H1 (cell line): ENCODE measurements at regions of chr2 and their contacts with region 1.

Region 1: DNA sequence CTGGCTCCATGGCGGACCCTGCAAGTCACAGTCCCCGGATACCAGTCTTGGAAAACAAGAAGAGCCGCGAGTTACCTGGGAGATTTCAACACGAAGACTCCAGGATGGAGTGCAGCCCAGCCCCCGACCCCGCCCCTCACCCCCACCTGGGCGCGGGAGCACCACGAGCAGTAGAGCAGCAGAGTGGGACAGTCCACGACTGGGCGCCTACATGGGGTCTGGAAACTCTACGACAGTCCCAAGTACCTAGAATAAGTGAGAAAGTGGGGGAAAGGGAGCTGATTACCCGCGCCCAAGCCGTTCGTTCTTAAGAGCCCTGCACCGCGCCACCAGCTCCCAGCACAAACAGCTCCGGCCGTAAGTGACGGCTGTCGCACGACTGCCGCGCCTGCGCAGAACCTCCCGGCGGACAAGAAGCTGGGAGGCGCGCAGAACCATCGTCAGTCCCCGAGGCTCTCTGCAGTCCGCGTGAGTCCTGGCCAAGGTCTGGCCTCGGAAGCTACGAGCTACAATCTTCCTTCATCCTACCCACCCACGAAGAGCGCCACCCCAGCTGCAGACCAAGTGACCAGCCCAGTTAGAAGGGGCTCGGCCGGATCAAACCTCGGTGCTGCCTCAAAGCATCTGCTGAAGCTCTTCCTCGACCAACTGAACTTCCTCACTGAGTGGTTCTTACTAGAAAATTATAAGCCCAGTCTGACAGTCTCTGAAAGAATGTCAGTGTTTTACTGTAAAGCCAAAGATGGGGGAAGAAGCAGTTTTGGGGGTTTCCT is at the start of gene DPY30:
- DNase-seq: peak; percentile 85 to 94
- H3K4me3 ChIP-seq: peak within 1 kb of the TSS; percentile 70 to 89 (median 82)
- H3K27ac ChIP-seq: peak within 1 kb of the TSS; percentile 84
- H3K4me1 ChIP-seq: no peaks in the 10 kb centered on the region; a peak in 1 of 7 replicates
- H3K27me3 ChIP-seq: no peaks in the 10 kb centered on the region
- CTCF ChIP-seq: peak in 1 of 3 experiments; percentile 12; a peak in 1 of 4 replicates
- EP300 ChIP-seq: no peak
- POLR2A ChIP-seq: peak; percentile 97 to 100
- RAD21 ChIP-seq: peak in 1 of 2 experiments; percentile 2; a peak in 1 of 4 replicates
- total RNA-seq, gene DPY30: 150 and 157 TPM in 2 replicates

Region 2: DNA sequence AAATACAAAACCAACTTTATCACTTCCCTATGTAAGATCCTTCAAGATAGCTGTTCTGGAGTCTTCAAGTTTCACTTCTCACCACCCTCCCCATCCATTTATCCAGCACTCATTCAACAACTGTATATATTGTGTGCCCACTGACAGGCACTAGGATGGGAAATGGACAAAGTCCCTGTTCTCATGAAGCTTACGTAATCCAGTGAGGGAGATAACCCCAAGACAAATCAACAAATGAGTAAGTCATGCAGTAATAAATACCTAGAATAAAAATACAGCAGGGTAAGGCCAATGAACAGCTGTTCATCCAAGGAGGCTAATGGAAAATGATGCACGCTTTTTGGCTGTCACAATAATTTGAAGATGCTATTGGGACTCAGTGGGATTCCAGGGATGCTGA is 162.6 kb before region 1 on chr2:
- CTCF ChIA-PET with region 1: no interaction called
- POLR2A ChIA-PET with region 1: no interaction called
- DNase-seq: no peak
- H3K4me3 ChIP-seq: no peak overlapping the region
- H3K27ac ChIP-seq: no peak overlapping the region
- H3K4me1 ChIP-seq: no peaks in the 10 kb centered on the region
- H3K27me3 ChIP-seq: no peaks in the 10 kb centered on the region; a peak in 1 of 7 replicates
- CTCF ChIP-seq: no peak
- EP300 ChIP-seq: no peak
- POLR2A ChIP-seq: no peak
- RAD21 ChIP-seq: no peak

Region 3: DNA sequence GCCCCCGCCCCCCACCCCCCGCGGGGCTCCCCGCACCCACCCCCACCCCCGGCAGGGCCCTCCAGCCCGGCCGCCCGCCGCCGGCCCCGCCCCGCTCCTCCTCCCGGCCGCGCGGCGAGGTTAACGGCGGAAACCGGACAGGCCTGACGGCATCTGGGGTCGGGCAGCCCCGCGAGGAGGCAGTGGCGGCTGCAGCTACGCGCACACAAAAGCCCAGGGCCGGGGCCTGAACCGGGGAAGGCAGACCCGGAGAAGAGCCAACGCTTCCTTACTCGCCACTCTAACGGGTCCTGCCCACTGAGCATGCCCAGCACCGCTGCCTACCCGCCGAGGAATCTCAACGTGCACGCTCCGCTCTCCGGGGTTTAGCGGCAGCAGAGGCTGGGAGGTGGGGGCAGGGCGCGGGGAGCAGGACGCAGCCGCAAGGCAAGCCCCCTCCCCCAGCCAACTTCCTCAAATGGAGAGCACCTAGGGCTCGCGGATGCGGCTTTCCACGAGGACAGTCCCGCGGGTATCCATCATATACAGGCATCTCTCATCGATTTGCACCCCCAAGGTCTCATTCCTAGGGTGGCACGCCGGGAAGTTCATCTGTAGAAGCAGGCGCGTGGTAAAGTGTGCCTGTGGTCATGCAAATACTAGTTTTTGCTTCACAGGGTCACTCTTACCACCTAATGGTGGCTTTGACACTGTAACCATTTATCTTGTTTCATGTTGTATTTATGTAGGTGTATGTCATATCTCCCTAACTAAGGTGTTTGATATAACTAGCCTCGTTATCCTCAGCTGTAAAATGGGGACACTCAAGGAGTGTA is 28.8 kb before region 1 on chr2 and contains the start of gene MEMO1:
- CTCF ChIA-PET with region 1: no interaction called
- POLR2A ChIA-PET with region 1: interaction called, 19 read pairs
- DNase-seq: peak; percentile 87 to 94
- H3K4me3 ChIP-seq: peak within 1 kb of the TSS; percentile 58 to 99 (median 81)
- H3K27ac ChIP-seq: peak within 1 kb of the TSS; percentile 84
- H3K4me1 ChIP-seq: peaks cover 0 to 13% (median 3%) of the 10 kb centered on the region in 4 experiments; a peak in 4 of 7 replicates
- H3K27me3 ChIP-seq: no peaks in the 10 kb centered on the region
- CTCF ChIP-seq: no peak
- EP300 ChIP-seq: peak in 1 of 2 experiments; percentile 73; a peak in 1 of 3 replicates
- POLR2A ChIP-seq: peak; percentile 63 to 78
- RAD21 ChIP-seq: peak in 1 of 2 experiments; percentile 6; a peak in 1 of 4 replicates
- total RNA-seq, gene MEMO1: 52.8 and 54.7 TPM in 2 replicates

Region 4: DNA sequence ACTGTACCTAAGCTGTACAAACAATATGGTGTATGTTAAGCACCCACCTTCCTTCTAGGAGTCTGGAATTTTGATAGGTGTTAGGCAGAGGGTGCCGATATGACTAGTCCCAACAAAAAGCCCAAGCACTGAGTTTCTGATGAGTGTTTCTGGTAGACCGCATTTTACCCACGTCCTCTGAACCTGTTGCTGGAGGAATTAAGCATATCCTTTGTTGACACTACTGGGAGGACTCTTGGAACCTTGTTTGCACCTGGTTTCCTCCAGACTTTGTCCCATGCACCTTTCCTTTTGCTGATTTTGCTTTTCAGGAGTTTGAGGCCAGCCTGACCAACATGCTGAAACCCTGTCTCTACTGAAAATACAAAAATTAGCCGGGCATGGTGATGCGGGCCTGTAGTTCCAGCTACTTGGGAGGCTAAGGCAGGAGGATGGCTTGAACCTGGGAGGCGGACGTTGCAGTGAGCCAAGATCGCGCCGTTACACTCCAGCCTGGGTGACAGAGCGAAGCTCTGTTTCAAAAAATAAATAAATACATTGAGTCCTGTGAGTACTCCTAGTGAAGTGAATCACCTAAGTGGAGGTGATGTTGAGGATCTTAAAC is 12.3 kb after region 1 on chr2:
- CTCF ChIA-PET with region 1: interaction called, 6 read pairs
- POLR2A ChIA-PET with region 1: interaction called, 13 read pairs
- DNase-seq: no peak
- H3K4me3 ChIP-seq: no peak overlapping the region
- H3K27ac ChIP-seq: no peak overlapping the region
- H3K4me1 ChIP-seq: no peaks in the 10 kb centered on the region
- H3K27me3 ChIP-seq: no peaks in the 10 kb centered on the region
- CTCF ChIP-seq: no peak
- EP300 ChIP-seq: no peak
- POLR2A ChIP-seq: no peak
- RAD21 ChIP-seq: no peak

Region 5: DNA sequence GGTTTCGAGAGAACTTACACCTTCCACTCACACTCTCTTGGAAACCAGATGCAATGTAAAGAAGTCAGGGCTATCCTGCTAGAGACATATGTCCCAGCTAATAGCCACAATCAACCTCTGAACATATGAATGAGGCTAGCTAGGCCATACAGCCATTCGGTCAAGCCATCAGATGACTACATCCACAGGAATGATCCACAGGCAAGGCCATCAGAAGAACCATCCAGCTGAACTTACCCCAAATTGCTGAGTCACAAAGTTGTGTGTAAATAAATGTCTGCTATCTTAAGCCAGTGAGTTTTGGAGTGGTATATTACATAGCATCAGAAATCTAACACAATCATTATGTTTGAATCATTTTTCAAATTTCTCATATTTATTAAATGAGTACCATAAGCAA is 18.5 kb after region 1 on chr2:
- CTCF ChIA-PET with region 1: interaction called, 13 read pairs
- POLR2A ChIA-PET with region 1: interaction called, 60 read pairs
- DNase-seq: no peak
- H3K4me3 ChIP-seq: no peak overlapping the region
- H3K27ac ChIP-seq: no peak overlapping the region
- H3K4me1 ChIP-seq: peaks cover 0 to 2% (median 0%) of the 10 kb centered on the region in 4 experiments; a peak in 1 of 7 replicates
- H3K27me3 ChIP-seq: no peaks in the 10 kb centered on the region
- CTCF ChIP-seq: no peak
- EP300 ChIP-seq: no peak
- POLR2A ChIP-seq: no peak
- RAD21 ChIP-seq: no peak

Region 6: GRCh38 chr2:32063310-32064161 is 23.9 kb after region 1 on chr2 and contains the start of gene SPAST:
- CTCF ChIA-PET with region 1: interaction called, 13 read pairs
- POLR2A ChIA-PET with region 1: interaction called, 60 read pairs
- DNase-seq: peak; percentile 96 to 97
- H3K4me3 ChIP-seq: peak within 1 kb of the TSS; percentile 54 to 83 (median 68)
- H3K27ac ChIP-seq: peak within 1 kb of the TSS; percentile 70; the same call in 1 of the 2 replicates
- H3K4me1 ChIP-seq: peaks cover 0 to 2% (median 0%) of the 10 kb centered on the region in 4 experiments; a peak in 2 of 7 replicates
- H3K27me3 ChIP-seq: no peaks in the 10 kb centered on the region
- CTCF ChIP-seq: peak; percentile 4 to 24 (median 19); a peak in 2 of 4 replicates
- EP300 ChIP-seq: 0 out of 3 replicates have a peak, but pooled peaks of 1 of the 2 experiments have one; percentile 47
- POLR2A ChIP-seq: peak; percentile 91 to 92
- RAD21 ChIP-seq: peak in 1 of 2 experiments; percentile 15; a peak in 2 of 4 replicates
- total RNA-seq, gene SPAST: 31.9 and 36.0 TPM in 2 replicates

Region 7: GRCh38 chr2:32166115-32166574 is 126.5 kb after region 1 on chr2:
- CTCF ChIA-PET with region 1: no interaction called
- POLR2A ChIA-PET with region 1: interaction called, 10 read pairs
- DNase-seq: no peak
- H3K4me3 ChIP-seq: peak overlapping the region; percentile 74 to 98 (median 94)
- H3K27ac ChIP-seq: peak overlapping the region; percentile 75; the same call in 1 of the 2 replicates
- H3K4me1 ChIP-seq: no peaks in the 10 kb centered on the region
- H3K27me3 ChIP-seq: no peaks in the 10 kb centered on the region
- CTCF ChIP-seq: no peak
- EP300 ChIP-seq: no peak
- POLR2A ChIP-seq: no peak
- RAD21 ChIP-seq: no peak